CD8-positive, alpha-beta T cell (primary cell): ENCODE measurements at regions of chr10 and their contacts with region 1.

Region 1: GRCh38 chr10:120942806-120943413 is 91.7 kb downstream of the WDR11 start:
- DNase-seq: peak; percentile 45 to 80 (median 68)
- ATAC-seq: peak; percentile 79
- H3K4me3 ChIP-seq: no peak overlapping the region
- H3K4me3 Mint-ChIP-seq: peak overlapping the region; percentile 8
- H3K27ac ChIP-seq: no peak overlapping the region
- H3K27ac Mint-ChIP-seq: no peak overlapping the region
- H3K4me1 ChIP-seq: peaks cover 3% of the 10 kb centered on the region
- H3K4me1 Mint-ChIP-seq: peaks cover 4% of the 10 kb centered on the region
- H3K27me3 ChIP-seq: no peaks in the 10 kb centered on the region
- H3K27me3 Mint-ChIP-seq: peaks cover 22% of the 10 kb centered on the region
- CTCF ChIP-seq: peak; percentile 68

Region 2: DNA sequence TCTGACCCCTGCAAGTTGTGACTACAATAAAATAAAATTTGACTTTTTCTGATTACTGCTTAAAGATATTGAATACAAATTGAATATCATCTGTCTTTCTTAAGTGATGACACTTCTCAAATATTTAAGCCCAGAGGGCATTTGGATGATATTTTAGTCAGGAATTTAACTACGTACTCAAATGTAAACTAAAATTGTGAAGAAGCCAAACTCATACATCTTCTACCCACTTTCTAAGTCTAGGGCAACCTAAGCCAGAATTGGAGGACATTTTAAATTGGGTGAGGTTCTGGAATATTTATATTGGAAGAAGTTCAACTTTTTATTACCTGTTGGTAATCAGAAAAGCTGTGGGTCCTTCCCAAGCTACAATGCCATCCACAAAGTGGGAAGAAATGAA is 240.9 kb before region 1 on chr10:
- CTCF ChIA-PET with region 1: no interaction called
- POLR2A ChIA-PET with region 1: no interaction called
- intact Hi-C with region 1: no loop called
- DNase-seq: no peak
- ATAC-seq: no peak
- H3K4me3 ChIP-seq: no peak overlapping the region
- H3K4me3 Mint-ChIP-seq: no peak overlapping the region
- H3K27ac ChIP-seq: no peak overlapping the region
- H3K27ac Mint-ChIP-seq: no peak overlapping the region
- H3K4me1 ChIP-seq: no peaks in the 10 kb centered on the region
- H3K4me1 Mint-ChIP-seq: no peaks in the 10 kb centered on the region
- H3K27me3 ChIP-seq: no peaks in the 10 kb centered on the region
- H3K27me3 Mint-ChIP-seq: peaks cover 2% of the 10 kb centered on the region
- CTCF ChIP-seq: no peak

Region 3: DNA sequence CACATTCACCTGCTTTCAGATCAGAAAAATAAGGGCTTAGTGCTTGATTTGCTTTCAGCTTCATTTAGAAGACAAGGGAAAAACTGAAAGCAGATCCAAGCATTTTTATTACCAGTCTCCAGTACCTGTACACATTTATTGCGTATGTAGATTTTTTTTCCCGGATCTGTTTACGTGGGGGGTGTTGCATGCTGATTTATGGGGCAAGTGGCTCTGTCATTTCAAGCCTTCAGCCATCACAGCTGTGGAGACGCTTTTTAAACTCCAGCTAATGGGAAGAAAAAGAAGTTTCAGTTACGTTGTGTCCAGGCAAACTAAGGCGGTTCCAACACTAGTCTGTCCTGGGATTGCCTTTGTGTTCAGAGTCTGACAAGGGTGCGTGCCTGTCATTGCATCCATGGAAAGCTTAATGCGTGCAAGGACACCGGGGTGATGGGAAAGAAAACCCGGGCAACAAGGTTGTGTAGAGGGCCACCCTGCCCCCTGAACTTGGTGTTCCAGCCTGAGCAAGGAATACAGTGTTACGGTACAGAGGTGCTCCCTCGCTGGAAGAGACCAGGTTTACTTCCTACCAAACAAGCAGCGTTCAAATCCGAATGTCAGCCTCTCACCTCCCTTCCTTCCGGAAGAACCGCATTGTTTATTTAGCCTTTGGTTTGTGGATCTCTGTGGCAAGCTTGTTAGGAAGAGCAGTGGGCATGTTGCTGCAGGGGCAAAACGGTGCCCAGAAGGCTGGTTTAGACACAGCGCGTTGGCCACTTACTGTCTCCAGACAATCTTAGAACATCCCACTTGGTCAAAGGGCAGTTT is 527.1 kb after region 1 on chr10:
- CTCF ChIA-PET with region 1: no interaction called
- POLR2A ChIA-PET with region 1: no interaction called
- intact Hi-C with region 1: no loop called
- DNase-seq: no peak
- ATAC-seq: no peak
- H3K4me3 ChIP-seq: no peak overlapping the region
- H3K4me3 Mint-ChIP-seq: no peak overlapping the region
- H3K27ac ChIP-seq: no peak overlapping the region
- H3K27ac Mint-ChIP-seq: no peak overlapping the region
- H3K4me1 ChIP-seq: no peaks in the 10 kb centered on the region
- H3K4me1 Mint-ChIP-seq: no peaks in the 10 kb centered on the region
- H3K27me3 ChIP-seq: no peaks in the 10 kb centered on the region
- H3K27me3 Mint-ChIP-seq: no peaks in the 10 kb centered on the region
- CTCF ChIP-seq: no peak

Region 4: GRCh38 chr10:121608469-121609190 is 665.7 kb after region 1 on chr10:
- CTCF ChIA-PET with region 1: no interaction called
- POLR2A ChIA-PET with region 1: no interaction called
- intact Hi-C with region 1: loop called in 1 of 2 experiments (anchors 10 kb)
- DNase-seq: peak in 3 of 9 experiments; percentile 17 to 20 (median 19)
- ATAC-seq: no peak
- H3K4me3 ChIP-seq: no peak overlapping the region
- H3K4me3 Mint-ChIP-seq: no peak overlapping the region
- H3K27ac ChIP-seq: no peak overlapping the region
- H3K27ac Mint-ChIP-seq: no peak overlapping the region
- H3K4me1 ChIP-seq: no peaks in the 10 kb centered on the region
- H3K4me1 Mint-ChIP-seq: peaks cover 2% of the 10 kb centered on the region
- H3K27me3 ChIP-seq: no peaks in the 10 kb centered on the region
- H3K27me3 Mint-ChIP-seq: peaks cover 31% of the 10 kb centered on the region
- CTCF ChIP-seq: peak; percentile 9

Region 5: GRCh38 chr10:121734589-121735045 is 791.7 kb after region 1 on chr10:
- CTCF ChIA-PET with region 1: interaction called, 3 read pairs
- POLR2A ChIA-PET with region 1: no interaction called
- intact Hi-C with region 1: loop called (anchors 2 to 5 kb)
- DNase-seq: peak in 2 of 9 experiments; percentile 11 to 26
- ATAC-seq: no peak
- H3K4me3 ChIP-seq: no peak overlapping the region
- H3K4me3 Mint-ChIP-seq: no peak overlapping the region
- H3K27ac ChIP-seq: no peak overlapping the region
- H3K27ac Mint-ChIP-seq: no peak overlapping the region
- H3K4me1 ChIP-seq: no peaks in the 10 kb centered on the region
- H3K4me1 Mint-ChIP-seq: peaks cover 16% of the 10 kb centered on the region
- H3K27me3 ChIP-seq: no peaks in the 10 kb centered on the region
- H3K27me3 Mint-ChIP-seq: peaks cover 20% of the 10 kb centered on the region
- CTCF ChIP-seq: peak; percentile 42

Region 6: GRCh38 chr10:121886997-121887622 is 944.2 kb after region 1 on chr10:
- CTCF ChIA-PET with region 1: no interaction called
- POLR2A ChIA-PET with region 1: no interaction called
- intact Hi-C with region 1: loop called (anchors 1 to 5 kb)
- DNase-seq: peak in 8 of 9 experiments; percentile 6 to 53 (median 32)
- ATAC-seq: peak; percentile 64
- H3K4me3 ChIP-seq: no peak overlapping the region
- H3K4me3 Mint-ChIP-seq: no peak overlapping the region
- H3K27ac ChIP-seq: no peak overlapping the region
- H3K27ac Mint-ChIP-seq: peak overlapping the region; percentile 8
- H3K4me1 ChIP-seq: no peaks in the 10 kb centered on the region
- H3K4me1 Mint-ChIP-seq: no peaks in the 10 kb centered on the region
- H3K27me3 ChIP-seq: no peaks in the 10 kb centered on the region
- H3K27me3 Mint-ChIP-seq: no peaks in the 10 kb centered on the region
- CTCF ChIP-seq: no peak

Region 7: DNA sequence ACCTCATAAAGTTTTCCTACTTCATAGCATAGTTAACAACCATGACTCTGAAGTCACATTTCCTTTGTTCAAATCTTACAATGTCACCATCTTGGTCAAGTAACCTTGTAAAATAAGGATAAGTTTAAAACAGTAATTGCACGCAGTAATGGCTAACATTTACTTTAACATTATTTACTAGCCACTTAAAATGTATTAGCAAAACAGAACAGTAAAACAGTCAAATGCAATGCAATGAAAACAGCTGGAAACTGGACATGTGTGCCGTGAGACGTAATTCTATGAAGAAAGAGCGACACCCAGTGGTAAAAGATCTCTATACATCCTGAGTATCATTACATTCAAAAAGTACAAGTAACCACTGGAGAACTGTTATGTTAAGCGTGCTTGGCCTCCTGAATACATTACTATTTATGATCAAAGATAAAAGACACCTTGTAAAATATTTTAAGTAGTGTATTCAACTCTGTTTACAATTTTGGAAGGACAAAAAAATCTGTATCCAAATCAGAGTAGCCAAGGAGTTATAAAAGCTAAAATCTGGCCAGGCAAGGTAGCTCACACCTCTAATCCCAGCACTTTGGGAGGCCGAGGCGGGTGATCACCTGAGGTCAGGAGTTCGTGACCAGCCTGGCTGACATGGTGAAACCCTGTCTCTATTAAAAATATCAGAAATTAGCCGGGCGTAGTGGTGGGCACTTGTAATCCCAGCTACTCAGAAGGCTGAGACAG is 957.7 kb after region 1 on chr10:
- CTCF ChIA-PET with region 1: interaction called, 6 read pairs
- POLR2A ChIA-PET with region 1: no interaction called
- intact Hi-C with region 1: loop called in 1 of 2 experiments (anchors 1 kb)
- DNase-seq: peak in 3 of 9 experiments; percentile 9 to 64 (median 50)
- ATAC-seq: peak; percentile 58
- H3K4me3 ChIP-seq: no peak overlapping the region
- H3K4me3 Mint-ChIP-seq: no peak overlapping the region
- H3K27ac ChIP-seq: no peak overlapping the region
- H3K27ac Mint-ChIP-seq: no peak overlapping the region
- H3K4me1 ChIP-seq: no peaks in the 10 kb centered on the region
- H3K4me1 Mint-ChIP-seq: peaks cover 5% of the 10 kb centered on the region
- H3K27me3 ChIP-seq: no peaks in the 10 kb centered on the region
- H3K27me3 Mint-ChIP-seq: no peaks in the 10 kb centered on the region
- CTCF ChIP-seq: peak; percentile 81

Region 8: GRCh38 chr10:122422266-122422985 is 1479.5 kb after region 1 on chr10:
- CTCF ChIA-PET with region 1: no interaction called
- POLR2A ChIA-PET with region 1: no interaction called
- intact Hi-C with region 1: no loop called
- DNase-seq: peak in 8 of 9 experiments; percentile 6 to 74 (median 32)
- ATAC-seq: peak; percentile 84
- H3K4me3 ChIP-seq: no peak overlapping the region
- H3K4me3 Mint-ChIP-seq: peak overlapping the region; percentile 29
- H3K27ac ChIP-seq: peak overlapping the region; percentile 30 to 66
- H3K27ac Mint-ChIP-seq: peak overlapping the region; percentile 89
- H3K4me1 ChIP-seq: peaks cover 87% of the 10 kb centered on the region
- H3K4me1 Mint-ChIP-seq: peaks cover 77% of the 10 kb centered on the region
- H3K27me3 ChIP-seq: no peaks in the 10 kb centered on the region
- H3K27me3 Mint-ChIP-seq: no peaks in the 10 kb centered on the region
- CTCF ChIP-seq: no peak

Region 9: GRCh38 chr10:122703439-122704118 is 1760.7 kb after region 1 on chr10:
- CTCF ChIA-PET with region 1: no interaction called
- POLR2A ChIA-PET with region 1: no interaction called
- intact Hi-C with region 1: loop called in 1 of 2 experiments (anchors 10 kb)
- DNase-seq: peak in 8 of 9 experiments; percentile 26 to 67 (median 48)
- ATAC-seq: peak; percentile 46
- H3K4me3 ChIP-seq: no peak overlapping the region
- H3K4me3 Mint-ChIP-seq: no peak overlapping the region
- H3K27ac ChIP-seq: no peak overlapping the region
- H3K27ac Mint-ChIP-seq: no peak overlapping the region
- H3K4me1 ChIP-seq: no peaks in the 10 kb centered on the region
- H3K4me1 Mint-ChIP-seq: peaks cover 3% of the 10 kb centered on the region
- H3K27me3 ChIP-seq: peaks cover 0 to 2% of the 10 kb centered on the region in 2 experiments
- H3K27me3 Mint-ChIP-seq: peaks cover 5% of the 10 kb centered on the region
- CTCF ChIP-seq: peak; percentile 67